Vagina (tissue), 2 donors: ENCODE measurements at regions of chr19 and their contacts with region 1.

Region 1: GRCh38 chr19:9435279-9436268 is at the start of gene ZNF266:
- DNase-seq: no peak
- H3K4me3 ChIP-seq: peak within 1 kb of the TSS; percentile 71 to 88
- H3K27ac ChIP-seq: peak within 1 kb of the TSS; percentile 90
- H3K4me1 ChIP-seq: peaks cover 23% of the 10 kb centered on the region
- H3K27me3 ChIP-seq: no peaks in the 10 kb centered on the region
- CTCF ChIP-seq: peak; percentile 32 to 73 (median 67)
- POLR2A ChIP-seq: no peak
- total RNA-seq, gene ZNF266: 22.8 TPM

Region 2: GRCh38 chr19:9309974-9310446 is 125.6 kb before region 1 on chr19:
- intact Hi-C with region 1: loop called (anchors 2 kb)
- DNase-seq: no peak
- H3K4me3 ChIP-seq: peak overlapping the region; percentile 65 to 66
- H3K27ac ChIP-seq: peak overlapping the region; percentile 89
- H3K4me1 ChIP-seq: peaks cover 17% of the 10 kb centered on the region
- H3K27me3 ChIP-seq: no peaks in the 10 kb centered on the region
- CTCF ChIP-seq: peak in 1 of 3 experiments; percentile 22
- POLR2A ChIP-seq: no peak

Region 3: DNA sequence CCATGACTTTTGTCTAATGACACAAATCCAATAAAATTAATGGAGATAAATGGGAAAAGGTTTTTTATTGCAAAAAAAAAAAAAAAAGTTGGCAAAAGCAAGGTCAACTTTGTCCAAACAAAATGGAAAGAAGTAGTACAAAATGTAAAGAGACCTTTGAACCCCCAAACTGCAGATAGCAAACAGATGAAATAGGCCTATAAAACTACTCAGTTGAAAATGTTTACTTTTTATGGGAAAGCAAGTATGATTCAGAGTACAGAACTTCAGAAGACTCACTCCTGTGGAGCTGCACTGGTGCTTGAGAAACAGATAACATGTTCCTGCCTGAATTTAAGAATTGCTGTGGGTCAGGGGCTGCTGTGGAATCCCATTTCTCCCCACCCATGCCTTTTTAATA is 82.6 kb before region 1 on chr19:
- intact Hi-C with region 1: no loop called
- DNase-seq: no peak
- H3K4me3 ChIP-seq: no peak overlapping the region
- H3K27ac ChIP-seq: no peak overlapping the region
- H3K4me1 ChIP-seq: no peaks in the 10 kb centered on the region
- H3K27me3 ChIP-seq: no peaks in the 10 kb centered on the region
- CTCF ChIP-seq: no peak
- POLR2A ChIP-seq: no peak